ENCODE measurements at regions of chr13 and their contacts with region 1.

Region 1: GRCh38 chr13:24020375-24020830 is 123.1 kb upstream of the C1QTNF9B start:
- DNase-seq: peak; percentile 62
- H3K4me3 ChIP-seq: no peak overlapping the region; a peak in 1 of 4 replicates
- H3K27ac ChIP-seq: no peak overlapping the region
- H3K4me1 ChIP-seq: no peaks in the 10 kb centered on the region
- H3K27me3 ChIP-seq: no peaks in the 10 kb centered on the region
- CTCF ChIP-seq: peak; percentile 95
- EP300 ChIP-seq: no peak
- RAD21 ChIP-seq: peak; percentile 92

Region 2: GRCh38 chr13:23876265-23876664 is 144.1 kb before region 1 on chr13:
- CTCF ChIA-PET with region 1: no interaction called
- POLR2A ChIA-PET with region 1: no interaction called
- DNase-seq: peak; percentile 36
- H3K4me3 ChIP-seq: no peak overlapping the region
- H3K27ac ChIP-seq: no peak overlapping the region
- H3K4me1 ChIP-seq: peaks cover 0 to under 1% of the 10 kb centered on the region in 2 experiments; a peak in 1 of 4 replicates
- H3K27me3 ChIP-seq: no peaks in the 10 kb centered on the region
- CTCF ChIP-seq: peak; percentile 58
- EP300 ChIP-seq: no peak
- RAD21 ChIP-seq: peak; percentile 61

Region 3: DNA sequence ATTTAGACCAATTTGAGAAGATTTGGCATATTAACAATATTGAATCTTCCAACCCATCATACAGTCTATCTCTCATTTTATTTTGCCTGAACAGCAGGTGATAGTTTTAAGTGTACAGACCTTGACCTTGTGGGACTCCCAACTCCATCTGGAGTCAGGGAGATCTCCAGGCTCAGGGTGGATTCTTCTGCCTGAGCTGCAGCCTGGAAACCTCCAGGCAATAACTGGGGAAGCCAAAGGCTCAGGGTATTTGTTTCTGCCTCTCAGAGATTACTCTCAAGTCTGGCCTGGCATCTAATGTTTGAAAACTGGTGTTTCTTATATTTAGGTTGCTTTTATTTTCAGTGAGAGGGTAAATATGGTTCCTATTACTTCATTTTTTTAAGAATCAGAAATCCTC is 21.0 kb before region 1 on chr13:
- CTCF ChIA-PET with region 1: interaction called, 11 read pairs
- POLR2A ChIA-PET with region 1: no interaction called
- DNase-seq: no peak
- H3K4me3 ChIP-seq: no peak overlapping the region
- H3K27ac ChIP-seq: no peak overlapping the region
- H3K4me1 ChIP-seq: peaks cover 0 to 10% of the 10 kb centered on the region in 2 experiments; a peak in 2 of 4 replicates
- H3K27me3 ChIP-seq: no peaks in the 10 kb centered on the region
- CTCF ChIP-seq: no peak
- EP300 ChIP-seq: no peak
- RAD21 ChIP-seq: no peak

Region 4: GRCh38 chr13:24033527-24034302 is 13.3 kb after region 1 on chr13:
- CTCF ChIA-PET with region 1: interaction called, 27 read pairs
- POLR2A ChIA-PET with region 1: no interaction called
- DNase-seq: no peak
- H3K4me3 ChIP-seq: no peak overlapping the region
- H3K27ac ChIP-seq: peak overlapping the region; percentile 12 to 74; a peak in 3 of 4 replicates
- H3K4me1 ChIP-seq: peaks cover 17 to 19% of the 10 kb centered on the region in 2 experiments; a peak in 3 of 4 replicates
- H3K27me3 ChIP-seq: no peaks in the 10 kb centered on the region
- CTCF ChIP-seq: no peak
- EP300 ChIP-seq: peak in 1 of 2 experiments; percentile 50; a peak in 1 of 4 replicates
- RAD21 ChIP-seq: no peak

Region 5: DNA sequence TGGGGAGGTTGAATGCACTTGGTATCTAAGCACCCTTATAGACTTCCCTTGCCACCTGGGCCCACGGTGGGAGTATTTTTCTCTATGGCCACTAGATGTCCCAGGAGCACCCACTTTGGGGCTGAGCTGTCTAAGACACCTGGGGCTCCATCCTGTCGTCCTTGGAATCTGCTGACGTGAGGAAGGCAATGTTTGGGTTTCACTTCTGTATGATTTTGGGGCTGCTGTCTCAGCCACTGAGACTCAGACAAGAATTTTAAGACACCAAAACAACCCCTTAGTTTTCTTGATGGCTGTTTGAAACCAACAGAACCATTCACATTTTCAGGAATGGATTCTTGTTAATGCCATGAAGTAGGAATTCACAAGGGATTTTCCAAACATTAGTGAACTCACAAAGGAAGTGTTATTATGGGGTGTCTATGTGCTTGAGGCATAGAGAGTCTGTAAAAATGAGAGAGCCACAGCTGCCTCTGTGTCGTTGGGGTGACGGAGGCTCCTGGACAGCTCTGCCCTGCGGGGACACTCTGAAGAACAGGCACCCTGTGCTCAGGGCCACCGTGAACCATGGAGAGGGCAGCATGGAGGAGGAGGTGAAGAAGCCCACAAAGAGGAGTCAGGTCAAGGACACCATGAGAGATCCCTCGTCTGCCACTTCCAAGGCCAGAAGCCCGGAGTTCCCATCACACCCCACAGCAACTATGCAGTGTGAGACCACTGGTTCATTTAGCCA is 33.3 kb after region 1 on chr13:
- CTCF ChIA-PET with region 1: interaction called, 42 read pairs
- POLR2A ChIA-PET with region 1: no interaction called
- DNase-seq: peak; percentile 76
- H3K4me3 ChIP-seq: no peak overlapping the region
- H3K27ac ChIP-seq: no peak overlapping the region
- H3K4me1 ChIP-seq: peaks cover 5 to 15% of the 10 kb centered on the region in 2 experiments; a peak in 3 of 4 replicates
- H3K27me3 ChIP-seq: no peaks in the 10 kb centered on the region
- CTCF ChIP-seq: peak; percentile 75
- EP300 ChIP-seq: no peak
- RAD21 ChIP-seq: peak; percentile 81

Region 6: GRCh38 chr13:24220086-24220703 is 199.8 kb after region 1 on chr13:
- CTCF ChIA-PET with region 1: interaction called, 98 read pairs
- POLR2A ChIA-PET with region 1: no interaction called
- DNase-seq: peak; percentile 77
- H3K4me3 ChIP-seq: no peak overlapping the region; a peak in 1 of 4 replicates
- H3K27ac ChIP-seq: no peak overlapping the region
- H3K4me1 ChIP-seq: peaks cover 0 to 11% of the 10 kb centered on the region in 2 experiments; a peak in 2 of 4 replicates
- H3K27me3 ChIP-seq: no peaks in the 10 kb centered on the region
- CTCF ChIP-seq: peak; percentile 85
- EP300 ChIP-seq: no peak
- RAD21 ChIP-seq: peak; percentile 96

Region 7: DNA sequence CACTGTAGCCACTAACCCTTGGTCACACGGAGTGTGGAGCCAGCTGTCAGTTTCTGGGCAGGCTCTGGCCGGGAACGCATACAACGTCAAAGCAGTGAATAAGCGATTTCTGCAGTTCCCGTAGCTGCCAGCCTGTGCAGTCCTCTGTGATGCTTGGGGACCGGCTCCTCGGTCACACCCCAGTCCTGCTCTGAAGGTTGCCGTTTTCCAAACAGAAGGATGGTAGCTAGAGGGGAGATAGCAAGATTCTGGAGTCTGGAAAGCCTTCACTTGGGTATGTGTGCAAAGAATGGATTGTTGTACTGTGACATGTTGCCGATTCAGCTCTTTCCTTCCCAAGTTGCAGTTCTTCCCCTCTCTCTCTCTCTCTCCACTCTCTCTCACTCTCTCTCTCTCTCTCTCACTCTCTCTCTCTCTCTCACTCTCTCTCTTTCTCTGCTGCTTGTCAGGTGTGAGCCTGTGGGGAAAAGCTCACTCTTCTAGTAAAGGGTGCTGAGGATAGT is 250.3 kb after region 1 on chr13:
- CTCF ChIA-PET with region 1: no interaction called
- POLR2A ChIA-PET with region 1: no interaction called
- DNase-seq: peak; percentile 70
- H3K4me3 ChIP-seq: peak overlapping the region; percentile 35 to 51; a peak in 3 of 4 replicates
- H3K27ac ChIP-seq: peak overlapping the region; percentile 59 to 89; a peak in 3 of 4 replicates
- H3K4me1 ChIP-seq: peaks cover 11 to 21% of the 10 kb centered on the region in 2 experiments
- H3K27me3 ChIP-seq: no peaks in the 10 kb centered on the region
- CTCF ChIP-seq: no peak
- EP300 ChIP-seq: no peak
- RAD21 ChIP-seq: no peak

Region 8: GRCh38 chr13:24348797-24349515 is 328.6 kb after region 1 on chr13:
- CTCF ChIA-PET with region 1: no interaction called
- POLR2A ChIA-PET with region 1: no interaction called
- DNase-seq: no peak
- H3K4me3 ChIP-seq: no peak overlapping the region
- H3K27ac ChIP-seq: no peak overlapping the region
- H3K4me1 ChIP-seq: no peaks in the 10 kb centered on the region
- H3K27me3 ChIP-seq: no peaks in the 10 kb centered on the region
- CTCF ChIP-seq: no peak
- EP300 ChIP-seq: no peak
- RAD21 ChIP-seq: no peak

Region 9: GRCh38 chr13:24618014-24618955 is 597.9 kb after region 1 on chr13:
- CTCF ChIA-PET with region 1: no interaction called
- POLR2A ChIA-PET with region 1: no interaction called
- DNase-seq: no peak
- H3K4me3 ChIP-seq: no peak overlapping the region
- H3K27ac ChIP-seq: no peak overlapping the region
- H3K4me1 ChIP-seq: no peaks in the 10 kb centered on the region
- H3K27me3 ChIP-seq: no peaks in the 10 kb centered on the region
- CTCF ChIP-seq: no peak
- EP300 ChIP-seq: no peak
- RAD21 ChIP-seq: no peak

Measured in SK-N-SH (cell line).